ENCODE measurements at regions of chr1 and their contacts with region 1.

Region 1: DNA sequence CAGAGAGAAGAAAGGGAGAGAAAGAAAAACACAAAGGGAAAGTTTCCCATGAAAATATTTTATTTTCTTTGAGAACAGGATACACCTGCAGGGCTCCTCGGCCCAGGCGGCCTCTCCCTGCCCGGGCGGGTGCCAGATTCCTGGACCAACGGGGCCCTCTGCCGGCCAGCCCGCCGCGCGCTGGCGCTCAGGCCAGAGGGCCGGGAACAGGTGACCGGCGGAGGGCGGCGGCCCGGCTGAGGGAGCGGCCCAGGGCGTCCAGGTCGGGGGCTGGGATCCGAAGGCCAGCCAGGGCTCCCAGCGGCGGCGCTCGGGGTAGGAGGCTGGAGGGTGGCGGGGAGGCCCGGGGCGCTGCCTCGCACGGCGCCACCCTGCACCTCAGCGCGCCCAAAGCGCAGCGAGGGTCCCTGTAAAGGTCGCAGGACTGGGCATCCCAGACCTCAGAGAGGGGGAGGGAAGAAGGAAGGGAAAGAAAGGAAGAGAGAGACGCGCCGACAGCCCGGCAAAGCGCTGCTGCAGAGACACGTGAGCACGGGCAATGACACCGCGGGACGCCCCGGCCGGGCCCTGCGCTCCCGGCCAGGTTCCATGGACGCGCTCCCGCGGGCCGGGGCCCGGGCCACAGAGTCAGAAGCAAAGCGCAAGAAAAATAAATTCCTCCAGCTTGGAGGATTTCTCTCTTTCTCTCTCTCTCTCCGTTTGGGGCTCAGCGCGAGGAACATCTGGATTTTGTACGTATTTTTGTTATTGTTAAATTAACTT is 927 bp downstream of the WNT9A start:
- DNase-seq: peak; percentile 72 to 85
- H3K4me3 ChIP-seq: peak overlapping the region; percentile 51 to 70 (median 61)
- H3K27ac ChIP-seq: peak overlapping the region; percentile 72 to 78
- H3K4me1 ChIP-seq: peaks cover 7 to 11% of the 10 kb centered on the region in 2 donors
- H3K27me3 ChIP-seq: no peaks in the 10 kb centered on the region
- CTCF ChIP-seq: peak; percentile 26 to 85 (median 65)
- POLR2A ChIP-seq: no peak

Region 2: GRCh38 chr1:227489572-227489971 is 457.2 kb before region 1 on chr1:
- intact Hi-C with region 1: loop called (anchors 10 kb)
- DNase-seq: no peak
- H3K4me3 ChIP-seq: no peak overlapping the region
- H3K27ac ChIP-seq: no peak overlapping the region
- H3K4me1 ChIP-seq: no peaks in the 10 kb centered on the region
- H3K27me3 ChIP-seq: no peaks in the 10 kb centered on the region
- CTCF ChIP-seq: no peak
- POLR2A ChIP-seq: no peak

Region 3: DNA sequence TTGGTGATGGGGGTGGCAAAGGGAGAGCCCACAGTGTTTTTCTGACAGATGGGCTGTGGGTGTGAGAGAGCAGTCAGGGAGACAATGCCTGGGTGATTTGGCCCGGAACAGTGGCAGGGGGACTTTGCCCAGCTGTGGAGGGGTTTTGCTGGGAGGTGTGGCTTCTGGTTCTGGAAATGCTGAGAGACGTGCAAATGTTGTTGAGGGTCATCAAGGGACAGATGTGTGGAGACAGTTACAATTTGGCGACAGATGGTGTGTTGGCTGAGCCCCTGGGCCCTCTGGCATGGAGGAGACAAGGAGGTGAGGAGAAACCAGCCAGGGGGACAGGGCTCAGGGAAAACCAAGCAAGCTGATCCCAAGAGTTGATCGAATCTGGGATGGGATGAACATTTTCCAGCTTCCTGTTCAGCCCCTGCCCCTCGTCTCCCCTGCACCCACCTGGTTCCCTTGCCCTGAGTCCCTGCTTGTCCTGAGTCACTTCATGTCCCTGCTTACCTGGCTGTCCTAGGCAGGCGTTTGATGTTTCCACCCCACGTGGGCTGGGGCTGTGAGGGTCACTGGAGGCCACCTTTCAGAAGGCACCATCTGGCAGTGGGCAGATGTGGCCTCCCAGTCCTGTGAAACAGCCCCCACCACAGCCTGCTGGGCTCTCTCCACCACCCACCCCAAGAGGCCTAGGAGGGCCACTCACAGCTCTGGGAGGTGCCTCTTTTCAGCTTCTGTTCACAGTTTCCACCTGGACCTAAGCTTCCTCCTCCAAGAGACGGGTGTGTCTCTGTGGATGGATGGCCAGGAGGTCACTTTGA is 399.3 kb before region 1 on chr1:
- intact Hi-C with region 1: no loop called
- DNase-seq: peak in 1 of 2 donors; percentile 42
- H3K4me3 ChIP-seq: no peak overlapping the region
- H3K27ac ChIP-seq: no peak overlapping the region
- H3K4me1 ChIP-seq: peaks cover 0 to 4% of the 10 kb centered on the region in 2 donors
- H3K27me3 ChIP-seq: no peaks in the 10 kb centered on the region
- CTCF ChIP-seq: no peak
- POLR2A ChIP-seq: no peak

Region 4: DNA sequence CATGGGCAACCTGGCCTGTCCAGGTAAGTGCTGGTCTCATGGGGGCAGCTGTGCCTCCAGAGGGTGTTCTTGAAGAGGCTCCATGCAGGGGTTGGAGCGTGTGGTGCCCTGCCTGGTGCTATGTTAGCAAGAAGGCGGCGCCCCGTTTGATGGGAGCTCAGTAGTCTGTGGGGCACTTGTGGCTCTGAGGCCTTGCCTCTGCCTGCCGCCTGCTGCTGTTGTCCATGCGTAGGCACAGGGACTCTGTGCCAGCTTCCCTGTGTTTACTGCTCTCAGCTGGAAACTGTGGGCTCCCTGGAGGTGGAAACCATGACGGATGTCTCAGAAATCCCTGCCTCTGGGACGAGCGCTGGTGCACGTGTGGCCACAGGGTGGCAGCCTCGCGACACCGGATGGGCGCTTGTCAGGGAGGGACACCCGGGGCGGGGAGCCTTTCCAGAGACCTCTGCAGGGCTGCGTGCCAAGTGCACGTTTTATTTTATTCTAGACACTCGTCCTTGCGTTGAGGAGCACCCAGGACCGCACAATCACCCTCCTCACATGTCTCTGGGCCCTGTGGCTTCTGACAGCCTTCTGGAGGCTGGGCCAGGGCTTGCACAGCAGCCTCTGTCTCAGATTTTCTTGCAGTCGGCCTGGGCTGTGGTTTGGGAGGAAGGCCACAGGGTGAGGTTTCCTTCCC is 184.4 kb before region 1 on chr1:
- intact Hi-C with region 1: loop called (anchors 10 kb)
- DNase-seq: peak; percentile 69 to 83
- H3K4me3 ChIP-seq: no peak overlapping the region
- H3K27ac ChIP-seq: peak overlapping the region in 1 of 2 donors; percentile 38
- H3K4me1 ChIP-seq: no peaks in the 10 kb centered on the region
- H3K27me3 ChIP-seq: no peaks in the 10 kb centered on the region
- CTCF ChIP-seq: peak in 2 of 3 donors; percentile 84 to 89
- POLR2A ChIP-seq: no peak